PC-3 (cell line): ENCODE measurements at regions of chr14 and their contacts with region 1.

Region 1: DNA sequence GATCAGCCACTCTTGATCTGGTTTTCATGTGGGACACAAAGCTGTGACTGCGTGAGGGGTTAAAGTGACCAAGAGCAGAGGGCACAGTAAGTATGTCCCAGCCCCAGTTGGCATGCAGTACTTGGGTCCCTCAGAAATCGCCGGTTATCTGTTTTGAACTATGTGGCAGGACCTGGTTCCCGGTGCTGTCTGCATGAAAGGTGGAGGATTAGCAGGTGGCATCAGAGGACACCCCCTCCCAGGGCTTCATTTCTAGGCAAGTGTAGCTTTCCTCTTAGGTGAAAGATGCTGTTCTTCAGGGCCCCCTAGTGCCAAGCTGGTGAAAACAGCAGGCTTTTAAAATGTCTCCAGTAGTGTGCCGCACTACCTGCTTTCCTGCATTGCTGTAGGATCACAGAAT is 57.1 kb downstream of the ATG14 start:
- DNase-seq: peak; percentile 63
- ATAC-seq: peak; percentile 43
- H3K4me3 ChIP-seq: no peak overlapping the region
- H3K27ac ChIP-seq: peak overlapping the region; percentile 86
- H3K4me1 ChIP-seq: peaks cover 61% of the 10 kb centered on the region
- H3K27me3 ChIP-seq: no peaks in the 10 kb centered on the region
- CTCF ChIP-seq: peak; percentile 86

Region 2: GRCh38 chr14:55026793-55027561 is 327.5 kb before region 1 on chr14 and contains the starts of genes SOCS4 and WDHD1:
- CTCF ChIA-PET with region 1: no interaction called
- POLR2A ChIA-PET with region 1: no interaction called
- intact Hi-C with region 1: no loop called
- DNase-seq: peak; percentile 99
- ATAC-seq: peak; percentile 92
- H3K4me3 ChIP-seq: peak within 1 kb of the TSS; percentile 75
- H3K27ac ChIP-seq: peak within 1 kb of the TSS; percentile 55
- H3K4me1 ChIP-seq: peaks cover 34% of the 10 kb centered on the region
- H3K27me3 ChIP-seq: no peaks in the 10 kb centered on the region
- CTCF ChIP-seq: peak; percentile 34
- total RNA-seq, gene SOCS4: 21.9 and 22.5 TPM in 2 replicates
- total RNA-seq, gene WDHD1: 45.9 and 47.1 TPM in 2 replicates

Region 3: DNA sequence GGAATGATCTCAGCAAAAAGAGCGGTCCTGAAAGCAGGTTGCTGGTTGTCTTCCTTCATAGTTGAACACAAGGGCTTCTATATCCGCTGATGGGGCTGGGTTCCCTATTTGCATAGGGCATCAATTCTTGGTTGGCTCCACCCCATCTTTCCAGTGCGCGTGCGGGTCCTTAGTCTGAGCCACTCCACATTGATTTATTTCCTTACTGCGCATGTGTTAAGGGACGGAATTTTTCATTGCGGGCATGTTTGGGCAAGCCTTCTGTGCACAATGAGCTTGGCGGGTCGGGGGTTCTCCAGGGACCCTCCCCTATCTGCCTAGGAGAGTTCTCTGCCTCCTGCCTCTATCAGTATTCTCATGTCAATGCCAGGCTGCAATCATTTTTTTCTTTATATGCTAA is 141.9 kb before region 1 on chr14:
- CTCF ChIA-PET with region 1: interaction called, 3 read pairs
- POLR2A ChIA-PET with region 1: no interaction called
- intact Hi-C with region 1: loop called (anchors 2 kb)
- DNase-seq: no peak
- ATAC-seq: peak; percentile 12; the same call in 1 of the 2 replicates
- H3K4me3 ChIP-seq: no peak overlapping the region
- H3K27ac ChIP-seq: no peak overlapping the region
- H3K4me1 ChIP-seq: no peaks in the 10 kb centered on the region
- H3K27me3 ChIP-seq: 0 out of 2 replicates have a peak, but pooled peaks cover under 1% of the 10 kb centered on the region
- CTCF ChIP-seq: no peak

Region 4: GRCh38 chr14:55245657-55246268 is 108.7 kb before region 1 on chr14:
- CTCF ChIA-PET with region 1: interaction called, 8 read pairs
- POLR2A ChIA-PET with region 1: no interaction called
- intact Hi-C with region 1: loop called (anchors 1 kb)
- DNase-seq: peak; percentile 76
- ATAC-seq: peak; percentile 84
- H3K4me3 ChIP-seq: no peak overlapping the region
- H3K27ac ChIP-seq: no peak overlapping the region
- H3K4me1 ChIP-seq: no peaks in the 10 kb centered on the region
- H3K27me3 ChIP-seq: 0 out of 2 replicates have a peak, but pooled peaks cover 3% of the 10 kb centered on the region
- CTCF ChIP-seq: peak; percentile 98

Region 5: DNA sequence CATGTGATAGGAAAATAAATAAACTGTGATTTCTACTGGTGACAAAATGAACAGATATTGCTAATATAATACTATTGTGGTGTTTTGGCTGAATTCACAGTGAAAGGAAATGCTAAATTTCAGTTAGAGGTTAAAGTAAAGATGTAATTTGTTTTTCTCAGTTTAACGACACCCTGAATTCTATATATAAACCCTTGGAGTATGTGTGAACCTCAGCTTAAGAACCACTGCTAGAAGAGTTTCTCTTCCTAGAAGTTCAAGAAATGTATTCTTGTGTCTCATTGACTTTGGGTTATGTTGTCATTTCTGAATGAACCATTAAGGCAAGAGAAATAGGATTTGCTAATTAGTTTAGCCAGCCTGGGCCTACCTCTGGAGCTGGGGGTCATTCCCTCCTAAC is 75.1 kb before region 1 on chr14:
- CTCF ChIA-PET with region 1: no interaction called
- POLR2A ChIA-PET with region 1: interaction called, 11 read pairs
- intact Hi-C with region 1: no loop called
- DNase-seq: no peak
- ATAC-seq: no peak
- H3K4me3 ChIP-seq: no peak overlapping the region
- H3K27ac ChIP-seq: no peak overlapping the region
- H3K4me1 ChIP-seq: peaks cover 6% of the 10 kb centered on the region
- H3K27me3 ChIP-seq: no peaks in the 10 kb centered on the region
- CTCF ChIP-seq: no peak

Region 6: GRCh38 chr14:55339770-55340169 is 14.7 kb before region 1 on chr14:
- CTCF ChIA-PET with region 1: no interaction called
- POLR2A ChIA-PET with region 1: no interaction called
- intact Hi-C with region 1: no loop called
- DNase-seq: peak; percentile 75
- ATAC-seq: peak; percentile 16; the same call in 1 of the 2 replicates
- H3K4me3 ChIP-seq: no peak overlapping the region
- H3K27ac ChIP-seq: no peak overlapping the region
- H3K4me1 ChIP-seq: peaks cover 25% of the 10 kb centered on the region
- H3K27me3 ChIP-seq: no peaks in the 10 kb centered on the region
- CTCF ChIP-seq: no peak

Region 7: DNA sequence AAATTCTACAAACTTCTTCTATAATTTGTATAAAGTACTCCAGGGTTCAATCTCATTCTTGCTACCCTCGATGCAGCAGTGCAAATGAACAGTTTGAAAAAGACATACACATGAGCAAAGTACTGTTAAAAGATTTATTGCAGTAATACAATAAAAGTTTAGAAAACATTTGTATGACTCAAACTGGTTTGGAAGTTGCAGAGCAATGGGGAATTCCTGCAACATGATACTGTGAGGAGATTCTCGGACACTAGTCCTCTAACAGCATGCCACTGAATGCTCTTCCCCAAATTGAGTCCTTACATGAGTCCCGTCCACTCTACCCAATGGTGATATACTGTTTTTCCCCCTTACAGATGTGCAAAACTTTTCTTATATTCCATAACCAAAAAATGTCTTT is 11.8 kb after region 1 on chr14:
- CTCF ChIA-PET with region 1: no interaction called
- POLR2A ChIA-PET with region 1: no interaction called
- intact Hi-C with region 1: loop called (anchors 1 kb)
- DNase-seq: peak; percentile 96
- ATAC-seq: peak; percentile 97
- H3K4me3 ChIP-seq: peak overlapping the region; percentile 5; the same call in 1 of the 2 replicates
- H3K27ac ChIP-seq: peak overlapping the region; percentile 81
- H3K4me1 ChIP-seq: peaks cover 25% of the 10 kb centered on the region
- H3K27me3 ChIP-seq: no peaks in the 10 kb centered on the region
- CTCF ChIP-seq: no peak